Activated B cell treated with CpG ODN at 0.5 μM for 24 hours (primary cell): ENCODE measurements at regions of chr19 and their contacts with region 1.

Region 1: GRCh38 chr19:52962394-52963246 is at the start of gene ZNF816:
- DNase-seq: peak; percentile 97
- ATAC-seq: peak; percentile 99
- H3K4me3 Mint-ChIP-seq: peak within 1 kb of the TSS; percentile 94
- H3K27ac Mint-ChIP-seq: peak within 1 kb of the TSS; percentile 92
- H3K4me1 Mint-ChIP-seq: peaks cover 31% of the 10 kb centered on the region
- H3K27me3 Mint-ChIP-seq: no peaks in the 10 kb centered on the region
- CTCF ChIP-seq: no peak
- total RNA-seq, gene ZNF816: 17.0 and 18.0 TPM in 2 replicates

Region 2: GRCh38 chr19:52535771-52536447 is 426.7 kb before region 1 on chr19:
- CTCF ChIA-PET with region 1: no interaction called
- POLR2A ChIA-PET with region 1: no interaction called
- intact Hi-C with region 1: loop called (anchors 5 kb)
- DNase-seq: peak; percentile 86
- ATAC-seq: peak; percentile 98
- H3K4me3 Mint-ChIP-seq: peak overlapping the region; percentile 92
- H3K27ac Mint-ChIP-seq: peak overlapping the region; percentile 86
- H3K4me1 Mint-ChIP-seq: peaks cover 23% of the 10 kb centered on the region
- H3K27me3 Mint-ChIP-seq: no peaks in the 10 kb centered on the region
- CTCF ChIP-seq: no peak

Region 3: DNA sequence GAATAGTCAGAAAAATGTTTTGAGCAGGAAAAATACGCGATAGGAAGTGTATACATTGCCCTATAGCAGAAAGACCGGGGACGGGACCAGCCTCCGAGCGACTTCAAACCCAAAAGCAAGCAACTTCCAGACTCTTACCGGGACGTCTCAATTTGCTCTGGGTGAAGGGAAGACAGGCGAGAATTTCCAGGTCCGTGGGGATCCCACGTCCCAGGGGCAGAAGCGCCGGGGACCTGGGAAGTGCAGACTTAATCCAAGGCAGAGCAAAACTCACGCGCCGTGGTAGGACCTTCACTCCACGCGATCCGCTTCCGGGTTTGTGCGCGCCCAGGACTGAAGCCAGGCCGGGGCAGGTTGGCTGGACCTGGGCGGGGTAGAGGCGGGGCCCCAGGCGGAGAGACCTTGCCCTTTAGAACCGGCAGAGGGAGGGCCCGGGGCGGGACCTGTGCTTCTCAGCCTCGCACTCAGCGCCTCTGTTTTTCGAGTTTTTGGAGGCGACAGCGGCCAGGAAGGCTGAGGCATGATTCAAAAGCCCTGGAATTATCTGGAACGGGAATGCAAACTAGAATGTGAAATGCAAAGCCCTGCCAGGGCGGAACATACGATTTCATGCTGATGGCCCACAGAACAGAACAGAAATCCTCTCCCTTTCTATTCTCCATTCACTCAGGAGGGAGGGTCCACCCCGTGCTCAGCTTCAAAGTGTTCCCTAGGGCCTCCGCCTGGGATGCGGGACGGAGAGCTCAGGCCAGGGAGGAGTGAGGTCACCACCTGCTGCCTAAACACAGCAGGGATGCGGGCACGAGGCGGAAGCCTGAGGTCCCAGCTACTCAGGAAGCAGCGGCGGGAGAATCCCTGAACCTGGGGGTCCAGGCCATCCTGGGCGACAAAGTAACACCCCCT is 175.9 kb before region 1 on chr19 and contains the start of gene ZNF600:
- CTCF ChIA-PET with region 1: no interaction called
- POLR2A ChIA-PET with region 1: no interaction called
- intact Hi-C with region 1: loop called (anchors 1 kb)
- DNase-seq: peak; percentile 88
- ATAC-seq: peak; percentile 99
- H3K4me3 Mint-ChIP-seq: peak within 1 kb of the TSS; percentile 96
- H3K27ac Mint-ChIP-seq: peak within 1 kb of the TSS; percentile 90
- H3K4me1 Mint-ChIP-seq: peaks cover 36% of the 10 kb centered on the region
- H3K27me3 Mint-ChIP-seq: no peaks in the 10 kb centered on the region
- CTCF ChIP-seq: no peak
- total RNA-seq, gene ZNF600: 25.2 and 30.5 TPM in 2 replicates

Region 4: GRCh38 chr19:52853880-52854279 is 108.7 kb before region 1 on chr19:
- CTCF ChIA-PET with region 1: no interaction called
- POLR2A ChIA-PET with region 1: no interaction called
- intact Hi-C with region 1: loop called (anchors 1 kb)
- DNase-seq: no peak
- ATAC-seq: no peak
- H3K4me3 Mint-ChIP-seq: no peak overlapping the region
- H3K27ac Mint-ChIP-seq: no peak overlapping the region
- H3K4me1 Mint-ChIP-seq: peaks cover 22% of the 10 kb centered on the region
- H3K27me3 Mint-ChIP-seq: no peaks in the 10 kb centered on the region
- CTCF ChIP-seq: no peak

Region 5: GRCh38 chr19:52897144-52897935 is 65.3 kb before region 1 on chr19 and contains the start of gene ZNF320:
- CTCF ChIA-PET with region 1: no interaction called
- POLR2A ChIA-PET with region 1: interaction called, 5 read pairs
- intact Hi-C with region 1: loop called (anchors 1 kb)
- DNase-seq: peak; percentile 95
- ATAC-seq: peak; percentile 100
- H3K4me3 Mint-ChIP-seq: peak within 1 kb of the TSS; percentile 95
- H3K27ac Mint-ChIP-seq: peak within 1 kb of the TSS; percentile 94
- H3K4me1 Mint-ChIP-seq: peaks cover 15% of the 10 kb centered on the region
- H3K27me3 Mint-ChIP-seq: no peaks in the 10 kb centered on the region
- CTCF ChIP-seq: no peak
- total RNA-seq, gene ZNF320: 23.0 and 24.0 TPM in 2 replicates

Region 6: DNA sequence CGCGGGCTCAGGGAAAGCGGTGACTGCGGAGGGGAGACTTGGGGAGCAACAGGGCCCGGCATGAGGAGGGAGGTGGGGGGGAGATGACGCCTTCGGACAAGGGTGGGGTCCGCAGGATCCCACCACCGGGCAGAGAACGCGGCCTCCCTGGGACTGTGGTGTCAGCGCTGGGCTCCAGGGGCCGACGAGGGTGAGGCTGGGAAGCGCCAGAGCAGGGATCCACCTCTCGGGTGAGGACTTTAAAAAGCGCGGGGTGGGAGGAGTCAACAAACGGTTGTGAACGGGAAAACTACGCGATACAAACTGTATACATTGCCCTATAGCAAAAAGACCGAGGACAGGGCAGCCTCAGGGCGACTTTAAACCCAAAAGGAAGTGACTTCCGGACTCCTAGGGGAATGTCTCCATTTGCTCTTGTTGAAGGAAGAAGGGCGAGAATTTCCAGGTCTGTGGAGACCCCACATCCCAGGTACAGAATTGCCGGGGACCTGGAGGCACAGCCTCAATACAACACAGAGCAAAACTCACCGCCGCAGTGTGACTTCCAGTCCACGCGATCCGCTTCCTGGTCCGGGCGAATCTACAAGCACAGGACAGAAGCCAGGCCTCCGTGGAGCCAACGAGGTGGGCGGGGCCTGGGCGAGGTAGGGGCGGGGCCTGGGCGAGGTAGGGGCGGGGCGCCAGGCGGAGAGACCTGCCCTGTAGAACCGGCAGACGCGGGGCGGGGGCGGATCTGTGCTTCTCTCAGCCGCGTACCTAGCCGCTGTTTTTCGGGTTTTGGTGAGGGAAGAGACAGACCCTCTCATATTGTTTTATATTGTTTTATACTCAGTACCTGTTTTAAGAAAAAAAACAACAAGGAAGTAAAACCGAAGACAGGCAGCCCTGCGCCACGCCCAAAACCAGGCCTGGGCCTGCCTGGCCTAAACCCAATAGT is 39.5 kb before region 1 on chr19 and contains the start of gene ZNF888:
- CTCF ChIA-PET with region 1: no interaction called
- POLR2A ChIA-PET with region 1: interaction called, 4 read pairs
- intact Hi-C with region 1: loop called (anchors 2 kb)
- DNase-seq: peak; percentile 81
- ATAC-seq: peak; percentile 100
- H3K4me3 Mint-ChIP-seq: peak within 1 kb of the TSS; percentile 95
- H3K27ac Mint-ChIP-seq: peak within 1 kb of the TSS; percentile 88
- H3K4me1 Mint-ChIP-seq: peaks cover 29% of the 10 kb centered on the region
- H3K27me3 Mint-ChIP-seq: no peaks in the 10 kb centered on the region
- CTCF ChIP-seq: no peak
- total RNA-seq, gene ZNF888: 9.0 and 11.9 TPM in 2 replicates

Region 7: DNA sequence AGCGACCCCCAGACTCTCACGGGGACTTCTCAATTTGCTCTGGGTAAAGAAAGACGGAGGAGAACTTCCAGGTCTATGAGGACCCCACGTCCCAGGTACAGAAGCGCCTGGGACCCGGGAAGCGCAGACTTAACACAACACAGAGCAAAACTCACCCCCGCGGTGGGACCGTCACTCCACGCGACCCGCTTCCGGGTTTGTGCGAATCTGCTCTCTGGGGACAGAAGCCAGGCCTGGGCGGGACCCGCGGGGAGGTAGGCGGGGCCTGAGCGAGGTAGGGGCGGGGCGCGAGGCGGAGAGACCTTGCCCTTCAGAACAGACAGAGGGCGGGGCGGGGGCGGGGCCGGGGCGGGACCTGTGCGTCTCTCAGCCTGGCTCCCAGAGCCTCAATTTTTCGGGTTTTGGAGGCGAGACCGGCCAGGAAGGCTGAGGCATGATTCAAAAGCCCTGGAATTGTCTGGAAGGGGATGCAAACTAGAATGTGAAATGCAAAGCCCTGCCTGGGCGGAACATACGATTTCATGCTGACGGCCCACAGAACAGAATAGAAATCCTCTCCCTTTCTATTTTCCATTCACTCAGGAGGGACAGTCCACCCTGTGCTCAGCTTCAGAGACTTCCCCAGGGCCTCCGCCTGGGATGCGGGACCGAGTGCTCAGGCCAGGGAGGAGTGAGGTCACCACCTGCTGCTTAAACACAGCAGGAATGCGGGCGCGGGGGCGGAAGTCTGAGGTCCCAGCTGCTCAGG is 20.1 kb before region 1 on chr19:
- CTCF ChIA-PET with region 1: no interaction called
- POLR2A ChIA-PET with region 1: interaction called, 8 read pairs
- intact Hi-C with region 1: loop called (anchors 1 kb)
- DNase-seq: peak; percentile 98
- ATAC-seq: peak; percentile 99
- H3K4me3 Mint-ChIP-seq: peak overlapping the region; percentile 96
- H3K27ac Mint-ChIP-seq: peak overlapping the region; percentile 92
- H3K4me1 Mint-ChIP-seq: peaks cover 31% of the 10 kb centered on the region
- H3K27me3 Mint-ChIP-seq: no peaks in the 10 kb centered on the region
- CTCF ChIP-seq: no peak